Lower lobe of right lung (tissue), 2 donors: ENCODE measurements at regions of chr16 and their contacts with region 1.

Region 1: DNA sequence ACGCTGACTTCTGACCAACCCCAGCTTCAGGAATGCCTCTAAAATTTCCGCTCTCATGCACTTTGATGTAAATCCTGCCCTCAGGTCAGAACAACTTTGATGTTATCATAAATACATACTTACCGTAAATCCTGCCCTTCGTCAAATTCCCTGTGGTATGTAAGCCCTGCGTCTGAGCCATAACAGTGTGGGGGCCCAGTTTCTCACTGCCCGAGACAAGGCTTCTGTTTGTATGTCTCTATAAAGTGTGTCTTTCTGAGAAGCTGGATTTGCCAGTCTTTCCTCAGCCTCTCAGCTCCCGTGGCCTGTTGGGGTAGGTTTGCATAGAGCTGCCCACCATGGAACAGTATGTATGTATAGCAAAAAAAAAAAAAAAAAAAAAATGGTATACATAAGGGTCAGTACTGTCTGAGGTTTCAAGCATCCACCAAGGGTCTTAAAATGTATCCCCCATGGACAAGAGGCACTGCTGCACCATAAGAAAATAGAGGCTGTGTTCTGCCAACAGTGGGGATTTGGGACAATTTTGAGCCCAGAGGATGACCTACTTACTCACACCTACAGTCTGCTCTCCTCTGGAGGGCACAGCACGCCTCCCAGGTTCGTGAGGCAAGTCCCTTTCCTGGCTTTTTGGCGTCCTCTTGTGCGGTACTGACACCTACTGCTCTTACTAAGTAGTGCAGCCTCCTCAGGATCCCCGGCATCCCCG is 17.5 kb downstream of the PRMT7 start:
- DNase-seq: peak; percentile 82
- ATAC-seq: peak; percentile 92 to 94
- H3K4me3 ChIP-seq: no peak overlapping the region
- H3K27ac ChIP-seq: no peak overlapping the region
- H3K4me1 ChIP-seq: peaks cover 29% of the 10 kb centered on the region
- H3K27me3 ChIP-seq: no peaks in the 10 kb centered on the region
- CTCF ChIP-seq: peak; percentile 96

Region 2: DNA sequence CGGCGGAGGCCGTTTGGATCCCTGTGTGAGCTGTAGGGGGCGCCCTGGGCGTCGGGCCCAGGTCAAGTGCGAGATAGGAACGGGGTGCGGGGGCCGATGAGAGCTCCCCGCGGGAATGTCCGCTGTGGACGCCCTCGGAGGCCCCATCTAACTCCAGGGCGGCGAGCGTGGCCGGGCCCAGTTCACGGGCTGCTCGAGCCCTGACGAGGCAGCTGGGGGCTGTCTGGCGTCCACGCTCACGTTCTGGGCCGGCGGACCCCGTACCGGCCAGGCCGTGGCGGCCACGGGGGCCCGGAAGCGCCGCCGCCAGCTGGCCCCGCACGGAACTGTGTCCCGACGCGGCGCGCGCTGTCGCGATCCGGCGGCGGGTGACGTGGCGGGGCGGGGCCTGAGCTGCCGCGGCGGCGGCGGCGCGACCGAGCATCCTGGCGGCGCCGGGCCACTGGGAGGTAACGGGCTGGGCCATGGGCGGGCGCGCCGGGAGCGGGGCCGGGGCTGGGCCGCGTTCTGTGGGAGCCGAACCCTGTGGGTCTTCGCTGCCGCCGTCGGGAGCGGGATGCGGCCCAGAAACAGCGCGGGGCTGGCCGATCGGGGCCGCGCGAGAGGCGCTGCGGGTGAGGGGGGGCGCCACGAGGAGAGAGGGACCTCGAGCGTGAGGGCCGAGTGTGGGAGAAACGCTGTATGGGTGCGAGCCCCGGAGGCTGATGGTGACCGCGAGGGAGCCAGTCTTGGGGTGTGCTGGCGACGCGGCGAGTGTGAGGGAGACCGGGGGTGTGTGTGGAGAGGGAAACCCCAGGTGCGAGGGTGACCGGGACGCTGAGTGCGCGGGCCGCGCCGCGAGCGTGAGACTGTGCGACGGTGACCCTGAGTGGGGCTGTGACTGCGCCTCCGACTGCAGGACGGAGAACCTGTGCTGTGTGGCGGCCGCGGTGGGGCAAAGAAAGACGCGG is 63.9 kb before region 1 on chr16 and contains the start of gene SLC7A6:
- intact Hi-C with region 1: loop called (anchors 5 kb)
- DNase-seq: peak; percentile 86
- ATAC-seq: peak; percentile 86 to 87
- H3K4me3 ChIP-seq: peak within 1 kb of the TSS; percentile 83
- H3K27ac ChIP-seq: peak within 1 kb of the TSS; percentile 95
- H3K4me1 ChIP-seq: peaks cover 57% of the 10 kb centered on the region
- H3K27me3 ChIP-seq: no peaks in the 10 kb centered on the region
- CTCF ChIP-seq: peak; percentile 0
- total RNA-seq, gene SLC7A6: 47.1 TPM